Naive thymus-derived CD4-positive, alpha-beta T cell (primary cell): ENCODE measurements at regions of chr17 and their contacts with region 1.

Region 1: GRCh38 chr17:30824356-30825145 is at the start of gene CRLF3:
- DNase-seq: peak; percentile 88 to 94 (median 92)
- ATAC-seq: peak; percentile 97
- H3K4me3 ChIP-seq: peak within 1 kb of the TSS; percentile 62
- H3K4me3 Mint-ChIP-seq: peak within 1 kb of the TSS; percentile 92 to 100 (median 98)
- H3K27ac ChIP-seq: peak within 1 kb of the TSS; percentile 91
- H3K27ac Mint-ChIP-seq: peak within 1 kb of the TSS; percentile 84 to 99 (median 91)
- H3K4me1 ChIP-seq: peaks cover 23 to 25% of the 10 kb centered on the region in 2 donors
- H3K4me1 Mint-ChIP-seq: peaks cover 25 to 42% (median 36%) of the 10 kb centered on the region in 7 donors
- H3K27me3 ChIP-seq: no peaks in the 10 kb centered on the region
- H3K27me3 Mint-ChIP-seq: no peaks in the 10 kb centered on the region
- total RNA-seq, gene CRLF3: 65.5 to 142 (median 86.7) TPM

Region 2: DNA sequence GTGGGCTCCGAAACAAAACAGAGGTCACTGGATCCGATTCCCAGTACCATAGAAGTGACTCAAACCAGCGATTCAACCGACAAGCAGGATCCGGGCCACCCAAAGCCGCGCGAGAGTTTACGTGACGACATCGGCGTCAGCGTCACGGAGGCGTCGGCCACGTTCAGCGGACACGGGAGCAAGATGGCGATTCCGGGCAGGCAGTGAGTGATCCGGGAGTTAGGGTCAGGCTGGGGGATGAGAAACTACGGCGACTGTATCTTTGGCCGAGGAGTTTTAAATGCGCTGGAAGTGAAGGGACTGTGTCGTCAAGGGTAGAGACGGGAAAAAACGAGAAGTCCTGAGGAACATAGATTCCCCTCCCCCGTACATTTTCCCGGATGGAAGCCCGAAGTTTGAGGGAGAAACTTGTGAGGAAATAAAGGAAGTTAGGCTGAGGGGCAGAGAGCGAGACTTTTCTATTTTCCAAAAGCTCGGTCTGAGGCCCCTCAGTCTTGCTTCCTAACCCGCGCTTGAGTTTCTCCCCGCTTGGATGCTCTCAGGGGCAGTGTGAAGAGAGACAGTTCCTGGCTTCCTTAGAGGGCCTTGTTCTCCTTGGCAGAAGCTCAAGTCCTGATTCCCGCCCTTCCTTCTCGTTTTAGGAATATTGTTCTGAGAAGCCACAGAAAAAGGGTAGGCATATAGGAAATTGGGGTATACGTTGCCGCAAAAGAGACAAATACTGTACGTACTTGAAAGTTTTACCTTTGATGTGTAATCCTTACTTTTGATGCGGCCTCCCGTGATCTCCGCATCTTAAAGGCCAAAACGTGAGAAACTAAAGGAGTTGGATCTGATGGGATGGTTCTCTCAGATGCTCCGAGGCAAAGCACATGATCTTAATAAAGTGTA is 707.6 kb before region 1 on chr17 and contains the start of gene NSRP1:
- CTCF ChIA-PET with region 1: no interaction called
- POLR2A ChIA-PET with region 1: no interaction called
- intact Hi-C with region 1: loop called (anchors 5 to 10 kb)
- DNase-seq: peak; percentile 82 to 93 (median 90)
- ATAC-seq: peak; percentile 99
- H3K4me3 ChIP-seq: peak within 1 kb of the TSS; percentile 96
- H3K4me3 Mint-ChIP-seq: peak within 1 kb of the TSS; percentile 91 to 100 (median 98)
- H3K27ac ChIP-seq: peak within 1 kb of the TSS; percentile 97
- H3K27ac Mint-ChIP-seq: peak within 1 kb of the TSS; percentile 97 to 100 (median 100)
- H3K4me1 ChIP-seq: peaks cover 3 to 10% of the 10 kb centered on the region in 2 donors
- H3K4me1 Mint-ChIP-seq: peaks cover 20 to 57% (median 48%) of the 10 kb centered on the region in 7 donors
- H3K27me3 ChIP-seq: no peaks in the 10 kb centered on the region
- H3K27me3 Mint-ChIP-seq: no peaks in the 10 kb centered on the region
- total RNA-seq, gene NSRP1: 25.6 to 34.7 (median 29.3) TPM

Region 3: DNA sequence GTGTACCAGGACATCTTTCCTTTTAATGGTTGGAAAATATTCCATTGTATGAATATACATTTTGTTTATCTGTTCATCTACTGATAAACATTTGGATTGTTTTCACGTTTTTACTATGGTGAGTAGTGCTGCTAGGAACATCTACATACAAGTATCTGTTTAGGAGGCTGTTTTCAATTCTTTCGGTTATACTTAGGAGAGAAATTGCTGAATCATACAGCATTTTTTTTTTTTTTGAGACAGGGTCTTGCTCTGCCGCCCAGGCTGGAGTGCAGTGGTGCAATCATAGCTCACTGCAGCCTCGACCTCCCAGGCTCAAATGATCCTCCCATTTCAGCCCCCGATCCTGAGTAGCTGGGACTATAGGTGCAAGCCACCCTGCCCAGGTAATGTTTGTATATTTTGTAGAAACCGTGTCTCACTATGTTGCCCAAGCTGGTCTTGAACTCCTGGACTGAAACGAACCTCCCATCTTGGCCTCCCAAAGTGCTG is 123.0 kb before region 1 on chr17:
- CTCF ChIA-PET with region 1: interaction called, 4 read pairs
- POLR2A ChIA-PET with region 1: no interaction called
- intact Hi-C with region 1: loop called in 1 of 2 experiments (anchors 5 kb)
- DNase-seq: no peak
- ATAC-seq: no peak
- H3K4me3 ChIP-seq: no peak overlapping the region
- H3K4me3 Mint-ChIP-seq: no peak overlapping the region
- H3K27ac ChIP-seq: no peak overlapping the region
- H3K27ac Mint-ChIP-seq: no peak overlapping the region
- H3K4me1 ChIP-seq: peaks cover 0 to 9% of the 10 kb centered on the region in 2 donors
- H3K4me1 Mint-ChIP-seq: peaks cover 5 to 15% (median 10%) of the 10 kb centered on the region in 7 donors
- H3K27me3 ChIP-seq: no peaks in the 10 kb centered on the region
- H3K27me3 Mint-ChIP-seq: peaks cover 0 to 55% (median 12%) of the 10 kb centered on the region in 5 donors

Region 4: DNA sequence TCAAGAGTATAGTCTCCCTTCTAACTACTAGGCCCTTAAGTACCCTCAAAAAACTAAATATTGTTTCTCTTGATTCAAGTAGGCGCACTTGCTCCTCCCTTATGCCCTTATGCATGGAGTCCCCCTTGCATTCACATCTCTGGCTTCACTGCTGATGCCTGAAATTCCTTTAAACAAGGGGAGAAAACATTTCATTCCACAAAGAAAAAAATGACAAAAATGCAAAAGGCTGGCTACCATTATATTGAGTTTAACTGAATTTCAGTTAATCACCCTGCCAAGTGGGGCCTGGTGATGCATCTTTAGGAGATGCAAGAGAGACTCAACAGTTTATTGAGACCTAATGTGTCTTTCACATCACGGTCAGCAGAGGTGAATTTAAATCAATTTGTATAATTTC is 35.6 kb before region 1 on chr17:
- CTCF ChIA-PET with region 1: interaction called, 3 read pairs
- POLR2A ChIA-PET with region 1: interaction called, 4 read pairs
- intact Hi-C with region 1: loop called in 1 of 2 experiments (anchors 5 kb)
- DNase-seq: no peak
- ATAC-seq: no peak
- H3K4me3 ChIP-seq: no peak overlapping the region
- H3K4me3 Mint-ChIP-seq: no peak overlapping the region
- H3K27ac ChIP-seq: no peak overlapping the region
- H3K27ac Mint-ChIP-seq: peak overlapping the region in 6 of 9 donors; percentile 10 to 84 (median 72)
- H3K4me1 ChIP-seq: no peaks in the 10 kb centered on the region
- H3K4me1 Mint-ChIP-seq: peaks cover 7 to 19% (median 13%) of the 10 kb centered on the region in 7 donors
- H3K27me3 ChIP-seq: no peaks in the 10 kb centered on the region
- H3K27me3 Mint-ChIP-seq: no peaks in the 10 kb centered on the region

Region 5: GRCh38 chr17:30848021-30848420 is 23.5 kb after region 1 on chr17:
- CTCF ChIA-PET with region 1: no interaction called
- POLR2A ChIA-PET with region 1: no interaction called
- intact Hi-C with region 1: no loop called
- DNase-seq: no peak
- ATAC-seq: no peak
- H3K4me3 ChIP-seq: no peak overlapping the region
- H3K4me3 Mint-ChIP-seq: no peak overlapping the region
- H3K27ac ChIP-seq: no peak overlapping the region
- H3K27ac Mint-ChIP-seq: no peak overlapping the region
- H3K4me1 ChIP-seq: no peaks in the 10 kb centered on the region
- H3K4me1 Mint-ChIP-seq: peaks cover 0 to 3% (median 0%) of the 10 kb centered on the region in 7 donors
- H3K27me3 ChIP-seq: no peaks in the 10 kb centered on the region
- H3K27me3 Mint-ChIP-seq: no peaks in the 10 kb centered on the region

Region 6: DNA sequence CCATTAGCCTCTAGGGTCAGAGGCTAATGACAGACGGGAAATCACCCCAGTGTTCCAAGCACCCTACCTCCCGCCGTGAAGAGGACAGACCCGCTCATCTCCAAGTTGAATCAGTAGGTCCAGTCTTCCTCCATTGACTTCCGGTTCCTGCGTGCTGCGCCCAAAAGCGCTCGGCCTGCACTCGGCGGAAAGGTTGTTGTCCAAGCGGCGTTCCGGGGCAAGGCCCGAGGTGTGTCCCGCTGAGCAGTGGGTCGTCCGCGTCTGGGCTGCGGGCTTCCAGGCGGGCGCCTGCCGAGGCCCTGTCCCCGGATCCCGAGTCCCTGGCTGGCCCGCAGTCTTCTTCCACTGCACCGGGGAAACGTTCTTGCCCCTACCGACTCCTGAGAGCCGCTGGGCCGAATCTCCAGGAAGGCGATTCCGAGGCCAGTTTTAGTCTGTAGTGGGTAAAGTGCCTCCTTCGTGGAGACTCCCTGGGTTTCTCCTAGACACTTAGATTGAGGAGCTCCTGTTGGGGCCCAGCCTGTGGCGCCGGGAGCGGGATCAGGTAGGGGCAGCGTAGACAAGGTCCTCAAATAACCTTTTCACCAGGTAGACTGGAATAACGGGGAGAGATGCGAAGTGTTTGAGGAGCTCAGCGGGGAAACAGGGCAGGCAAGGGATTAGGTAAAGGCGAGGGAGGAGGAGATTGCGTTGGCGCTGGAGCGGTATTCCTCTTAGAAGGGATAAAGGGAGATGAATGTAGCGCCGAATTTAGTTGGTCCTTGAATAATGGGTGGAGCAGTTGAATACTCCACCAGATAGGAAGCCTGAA is 81.8 kb after region 1 on chr17 and contains the start of gene TEFM:
- CTCF ChIA-PET with region 1: no interaction called
- POLR2A ChIA-PET with region 1: no interaction called
- intact Hi-C with region 1: loop called in 1 of 2 experiments (anchors 5 kb)
- DNase-seq: peak; percentile 71 to 86 (median 80)
- ATAC-seq: peak; percentile 98
- H3K4me3 ChIP-seq: peak within 1 kb of the TSS; percentile 96
- H3K4me3 Mint-ChIP-seq: peak within 1 kb of the TSS; percentile 88 to 99 (median 92)
- H3K27ac ChIP-seq: peak within 1 kb of the TSS; percentile 88
- H3K27ac Mint-ChIP-seq: peak within 1 kb of the TSS; percentile 77 to 99 (median 92)
- H3K4me1 ChIP-seq: peaks cover 9 to 13% of the 10 kb centered on the region in 2 donors
- H3K4me1 Mint-ChIP-seq: peaks cover 33 to 65% (median 56%) of the 10 kb centered on the region in 7 donors
- H3K27me3 ChIP-seq: no peaks in the 10 kb centered on the region
- H3K27me3 Mint-ChIP-seq: no peaks in the 10 kb centered on the region
- total RNA-seq, gene TEFM: 8.5 to 22.1 (median 16.5) TPM

Region 7: GRCh38 chr17:31494259-31495021 is 669.9 kb after region 1 on chr17:
- CTCF ChIA-PET with region 1: no interaction called
- POLR2A ChIA-PET with region 1: interaction called, 5 read pairs
- intact Hi-C with region 1: loop called in 1 of 2 experiments (anchors 5 kb)
- DNase-seq: peak in 8 of 9 donors; percentile 53 to 82 (median 73)
- ATAC-seq: peak; percentile 82
- H3K4me3 ChIP-seq: peak overlapping the region; percentile 33
- H3K4me3 Mint-ChIP-seq: peak overlapping the region; percentile 76 to 98 (median 90)
- H3K27ac ChIP-seq: peak overlapping the region; percentile 90
- H3K27ac Mint-ChIP-seq: peak overlapping the region; percentile 95 to 98 (median 97)
- H3K4me1 ChIP-seq: peaks cover 71 to 84% of the 10 kb centered on the region in 2 donors
- H3K4me1 Mint-ChIP-seq: peaks cover 81 to 100% (median 94%) of the 10 kb centered on the region in 7 donors
- H3K27me3 ChIP-seq: no peaks in the 10 kb centered on the region
- H3K27me3 Mint-ChIP-seq: no peaks in the 10 kb centered on the region